ENCODE measurements at regions of chr4 and their contacts with region 1.

Region 1: DNA sequence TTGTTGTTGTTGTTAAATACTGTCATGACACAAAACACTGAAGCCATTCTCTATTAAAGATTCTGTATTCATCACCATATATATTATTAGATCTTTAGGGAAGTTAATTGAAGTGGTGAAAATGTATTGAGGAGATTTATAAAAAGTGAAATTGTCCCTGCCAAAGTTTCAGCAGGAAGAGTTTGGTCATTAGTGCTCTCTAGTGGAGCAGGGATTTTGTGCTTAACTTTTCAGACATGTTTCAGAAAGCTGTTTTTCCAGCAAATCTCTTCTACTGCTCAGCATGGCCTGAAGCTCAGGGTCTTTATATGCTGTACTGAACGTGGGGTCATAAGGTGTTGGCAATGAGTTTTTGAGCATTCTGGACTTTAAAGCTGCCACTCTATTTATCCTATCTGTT is 36.7 kb upstream of the CXXC4 start:
- DNase-seq: no peak

Region 2: GRCh38 chr4:104064646-104065577 is 466.5 kb before region 1 on chr4:
- intact Hi-C with region 1: loop called (anchors 5 kb)
- DNase-seq: no peak

Region 3: GRCh38 chr4:104465201-104465600 is 66.2 kb before region 1 on chr4:
- intact Hi-C with region 1: no loop called
- DNase-seq: no peak

Measured in cardiac septum (tissue), 1 donor.